A673 (cell line): ENCODE measurements at regions of chr22 and their contacts with region 1.

Region 1: GRCh38 chr22:35510481-35510934 is 30.1 kb upstream of the RASD2 start:
- DNase-seq: no peak
- H3K4me3 ChIP-seq: no peak overlapping the region
- H3K27ac ChIP-seq: no peak overlapping the region
- H3K4me1 ChIP-seq: peaks cover 34% of the 10 kb centered on the region
- H3K27me3 ChIP-seq: no peaks in the 10 kb centered on the region
- CTCF ChIP-seq: no peak

Region 2: GRCh38 chr22:35399678-35400334 is 110.7 kb before region 1 on chr22 and contains the start of gene MCM5:
- CTCF ChIA-PET with region 1: no interaction called
- POLR2A ChIA-PET with region 1: no interaction called
- intact Hi-C with region 1: no loop called
- DNase-seq: peak; percentile 99
- H3K4me3 ChIP-seq: peak within 1 kb of the TSS; percentile 99
- H3K27ac ChIP-seq: peak within 1 kb of the TSS; percentile 99
- H3K4me1 ChIP-seq: peaks cover 24% of the 10 kb centered on the region
- H3K27me3 ChIP-seq: no peaks in the 10 kb centered on the region
- CTCF ChIP-seq: no peak
- total RNA-seq, gene MCM5: 245 and 261 TPM in 2 replicates

Region 3: DNA sequence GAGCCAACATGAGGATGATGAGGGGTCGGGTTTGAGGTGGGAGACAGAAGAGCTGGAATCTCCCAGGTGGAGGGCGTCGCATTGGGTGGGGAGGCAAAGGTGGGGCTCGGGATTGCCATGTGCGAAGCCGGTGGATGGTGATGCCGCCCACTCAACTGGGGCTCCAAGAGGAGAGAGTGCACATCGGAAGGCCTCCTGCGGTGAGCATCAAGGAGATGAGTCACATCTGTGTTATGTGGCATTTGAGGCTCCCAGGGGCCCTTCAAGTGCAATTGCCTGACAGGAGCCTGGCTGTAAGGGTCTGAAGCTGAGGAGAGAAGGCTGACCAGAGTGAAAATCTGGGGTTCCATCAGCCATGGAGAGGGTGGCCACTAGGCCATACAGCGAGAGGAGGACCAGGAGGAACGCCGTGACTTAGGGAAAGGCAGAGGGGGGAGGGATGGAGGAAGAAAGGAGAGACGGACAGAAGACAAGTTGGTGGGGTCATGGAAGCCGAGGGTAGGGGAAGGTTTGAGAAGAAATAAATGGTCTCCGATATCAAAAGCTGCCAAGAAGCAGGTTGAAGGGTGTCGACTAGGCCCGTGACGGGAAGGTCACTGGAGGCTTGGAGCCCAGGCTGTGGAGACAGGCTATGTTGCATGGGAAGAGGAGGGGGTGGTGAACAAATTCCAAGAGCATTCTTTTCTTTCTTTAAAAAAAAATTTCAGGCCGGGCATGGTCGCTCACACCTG is 51.5 kb after region 1 on chr22:
- CTCF ChIA-PET with region 1: no interaction called
- POLR2A ChIA-PET with region 1: interaction called, 11 read pairs
- intact Hi-C with region 1: no loop called
- DNase-seq: peak; percentile 96
- H3K4me3 ChIP-seq: no peak overlapping the region
- H3K27ac ChIP-seq: peak overlapping the region; percentile 66
- H3K4me1 ChIP-seq: peaks cover 41% of the 10 kb centered on the region
- H3K27me3 ChIP-seq: no peaks in the 10 kb centered on the region
- CTCF ChIP-seq: no peak

Region 4: DNA sequence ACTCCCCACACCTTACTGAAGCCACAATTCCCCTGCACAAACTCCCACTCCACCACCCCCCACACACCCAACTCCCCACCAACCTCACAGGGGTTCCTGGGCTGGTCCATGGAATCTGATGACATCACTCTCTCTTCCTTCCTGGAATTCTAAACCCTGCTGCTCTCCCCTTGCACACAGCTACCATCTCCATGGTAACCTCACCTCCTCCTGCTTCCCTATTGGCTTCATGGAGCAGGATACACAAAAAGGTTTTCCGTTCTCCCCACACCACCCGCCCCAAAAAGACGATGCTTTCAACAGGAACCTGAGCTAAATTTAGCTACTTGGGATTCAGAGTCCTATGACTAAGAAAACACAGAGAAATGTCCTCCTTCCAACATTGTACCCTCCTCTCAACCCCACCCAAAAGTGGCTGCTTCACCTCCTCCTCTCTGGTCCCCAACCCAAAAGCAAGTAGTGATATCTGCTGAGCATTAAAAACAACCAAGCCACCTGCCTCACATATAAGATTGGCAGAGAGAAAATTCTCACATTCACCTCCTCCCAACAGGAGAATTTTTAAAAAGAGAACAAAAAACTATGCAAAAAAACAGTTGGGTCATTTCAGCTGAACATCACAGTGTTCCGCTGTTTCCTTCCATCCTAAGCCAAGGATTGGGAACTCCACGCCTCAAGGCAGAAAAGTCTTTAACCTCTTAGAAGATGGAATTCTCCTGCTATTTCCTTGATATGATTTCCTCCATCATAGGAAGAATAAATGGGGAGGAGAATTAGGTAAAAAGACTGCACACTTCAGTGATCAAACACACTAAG is 451.2 kb after region 1 on chr22:
- CTCF ChIA-PET with region 1: no interaction called
- POLR2A ChIA-PET with region 1: no interaction called
- intact Hi-C with region 1: no loop called
- DNase-seq: peak; percentile 48
- H3K4me3 ChIP-seq: no peak overlapping the region
- H3K27ac ChIP-seq: no peak overlapping the region
- H3K4me1 ChIP-seq: peaks cover 34% of the 10 kb centered on the region
- H3K27me3 ChIP-seq: no peaks in the 10 kb centered on the region
- CTCF ChIP-seq: no peak

Region 5: DNA sequence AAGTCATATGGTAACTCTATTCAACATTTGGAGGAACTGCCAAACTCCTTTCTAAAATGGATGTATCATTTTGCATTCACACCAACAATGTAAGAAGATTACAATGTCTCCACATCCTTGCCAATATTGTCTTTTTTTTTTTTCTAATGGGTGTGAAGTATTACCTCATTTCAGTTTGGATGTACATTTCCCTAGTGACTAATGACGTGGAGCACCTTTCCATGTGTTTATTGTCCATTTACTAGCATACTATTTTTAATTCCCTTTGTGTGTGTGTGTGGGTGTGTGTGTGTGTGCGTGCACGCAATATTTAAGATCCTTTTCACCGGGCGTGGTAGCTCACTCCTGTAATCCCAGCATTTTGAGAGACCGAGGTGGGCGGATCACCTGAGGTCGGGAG is 587.4 kb after region 1 on chr22:
- CTCF ChIA-PET with region 1: no interaction called
- POLR2A ChIA-PET with region 1: no interaction called
- intact Hi-C with region 1: no loop called
- DNase-seq: no peak
- H3K4me3 ChIP-seq: no peak overlapping the region
- H3K27ac ChIP-seq: no peak overlapping the region
- H3K4me1 ChIP-seq: no peaks in the 10 kb centered on the region
- H3K27me3 ChIP-seq: no peaks in the 10 kb centered on the region
- CTCF ChIP-seq: no peak

Region 6: GRCh38 chr22:36244522-36245391 is 734.2 kb after region 1 on chr22:
- CTCF ChIA-PET with region 1: no interaction called
- POLR2A ChIA-PET with region 1: no interaction called
- intact Hi-C with region 1: no loop called
- DNase-seq: no peak
- H3K4me3 ChIP-seq: no peak overlapping the region
- H3K27ac ChIP-seq: no peak overlapping the region
- H3K4me1 ChIP-seq: peaks cover 3% of the 10 kb centered on the region
- H3K27me3 ChIP-seq: no peaks in the 10 kb centered on the region
- CTCF ChIP-seq: no peak